Colonic mucosa (tissue), 4 donors: ENCODE measurements at regions of chr1 and their contacts with region 1.

Region 1: GRCh38 chr1:66242646-66243547 is 291.1 kb upstream of the SGIP1 start:
- DNase-seq: peak; percentile 83
- H3K4me3 ChIP-seq: no peak overlapping the region
- H3K27ac ChIP-seq: no peak overlapping the region
- H3K4me1 ChIP-seq: no peaks in the 10 kb centered on the region
- H3K27me3 ChIP-seq: no peaks in the 10 kb centered on the region
- CTCF ChIP-seq: peak; percentile 96

Region 2: GRCh38 chr1:65717815-65718454 is 525.0 kb before region 1 on chr1:
- intact Hi-C with region 1: loop called (anchors 5 kb)
- DNase-seq: peak; percentile 23
- H3K4me3 ChIP-seq: no peak overlapping the region
- H3K27ac ChIP-seq: no peak overlapping the region
- H3K4me1 ChIP-seq: no peaks in the 10 kb centered on the region
- H3K27me3 ChIP-seq: no peaks in the 10 kb centered on the region
- CTCF ChIP-seq: no peak

Region 3: GRCh38 chr1:65958561-65959350 is 284.1 kb before region 1 on chr1:
- intact Hi-C with region 1: loop called (anchors 2 kb)
- DNase-seq: no peak
- H3K4me3 ChIP-seq: no peak overlapping the region
- H3K27ac ChIP-seq: no peak overlapping the region
- H3K4me1 ChIP-seq: peaks cover 6% of the 10 kb centered on the region
- H3K27me3 ChIP-seq: no peaks in the 10 kb centered on the region
- CTCF ChIP-seq: peak; percentile 66